ENCODE measurements at regions of chr22 and their contacts with region 1.

Region 1: GRCh38 chr22:46006379-46007002 is 29.5 kb upstream of the WNT7B start:
- DNase-seq: peak; percentile 91
- H3K4me3 Mint-ChIP-seq: peak overlapping the region; percentile 54
- H3K27ac Mint-ChIP-seq: peak overlapping the region; percentile 91
- H3K4me1 Mint-ChIP-seq: peaks cover 16% of the 10 kb centered on the region
- H3K27me3 Mint-ChIP-seq: no peaks in the 10 kb centered on the region
- CTCF ChIP-seq: peak; percentile 79

Region 2: GRCh38 chr22:45948081-45948648 is 58.3 kb before region 1 on chr22:
- CTCF ChIA-PET with region 1: no interaction called
- POLR2A ChIA-PET with region 1: no interaction called
- intact Hi-C with region 1: no loop called
- DNase-seq: no peak
- H3K4me3 Mint-ChIP-seq: no peak overlapping the region
- H3K27ac Mint-ChIP-seq: no peak overlapping the region
- H3K4me1 Mint-ChIP-seq: peaks cover 1% of the 10 kb centered on the region
- H3K27me3 Mint-ChIP-seq: no peaks in the 10 kb centered on the region
- CTCF ChIP-seq: no peak

Region 3: GRCh38 chr22:45994491-45995404 is 11.7 kb before region 1 on chr22:
- CTCF ChIA-PET with region 1: interaction called, 56 read pairs
- POLR2A ChIA-PET with region 1: no interaction called
- intact Hi-C with region 1: no loop called
- DNase-seq: peak; percentile 78
- H3K4me3 Mint-ChIP-seq: no peak overlapping the region
- H3K27ac Mint-ChIP-seq: no peak overlapping the region
- H3K4me1 Mint-ChIP-seq: no peaks in the 10 kb centered on the region
- H3K27me3 Mint-ChIP-seq: no peaks in the 10 kb centered on the region
- CTCF ChIP-seq: peak; percentile 96

Region 4: GRCh38 chr22:46044621-46045438 is 38.3 kb after region 1 on chr22:
- CTCF ChIA-PET with region 1: interaction called, 47 read pairs
- POLR2A ChIA-PET with region 1: interaction called, 23 read pairs
- intact Hi-C with region 1: no loop called
- DNase-seq: no peak
- H3K4me3 Mint-ChIP-seq: peak overlapping the region; percentile 79
- H3K27ac Mint-ChIP-seq: peak overlapping the region; percentile 97
- H3K4me1 Mint-ChIP-seq: peaks cover 14% of the 10 kb centered on the region
- H3K27me3 Mint-ChIP-seq: no peaks in the 10 kb centered on the region
- CTCF ChIP-seq: no peak

Region 5: DNA sequence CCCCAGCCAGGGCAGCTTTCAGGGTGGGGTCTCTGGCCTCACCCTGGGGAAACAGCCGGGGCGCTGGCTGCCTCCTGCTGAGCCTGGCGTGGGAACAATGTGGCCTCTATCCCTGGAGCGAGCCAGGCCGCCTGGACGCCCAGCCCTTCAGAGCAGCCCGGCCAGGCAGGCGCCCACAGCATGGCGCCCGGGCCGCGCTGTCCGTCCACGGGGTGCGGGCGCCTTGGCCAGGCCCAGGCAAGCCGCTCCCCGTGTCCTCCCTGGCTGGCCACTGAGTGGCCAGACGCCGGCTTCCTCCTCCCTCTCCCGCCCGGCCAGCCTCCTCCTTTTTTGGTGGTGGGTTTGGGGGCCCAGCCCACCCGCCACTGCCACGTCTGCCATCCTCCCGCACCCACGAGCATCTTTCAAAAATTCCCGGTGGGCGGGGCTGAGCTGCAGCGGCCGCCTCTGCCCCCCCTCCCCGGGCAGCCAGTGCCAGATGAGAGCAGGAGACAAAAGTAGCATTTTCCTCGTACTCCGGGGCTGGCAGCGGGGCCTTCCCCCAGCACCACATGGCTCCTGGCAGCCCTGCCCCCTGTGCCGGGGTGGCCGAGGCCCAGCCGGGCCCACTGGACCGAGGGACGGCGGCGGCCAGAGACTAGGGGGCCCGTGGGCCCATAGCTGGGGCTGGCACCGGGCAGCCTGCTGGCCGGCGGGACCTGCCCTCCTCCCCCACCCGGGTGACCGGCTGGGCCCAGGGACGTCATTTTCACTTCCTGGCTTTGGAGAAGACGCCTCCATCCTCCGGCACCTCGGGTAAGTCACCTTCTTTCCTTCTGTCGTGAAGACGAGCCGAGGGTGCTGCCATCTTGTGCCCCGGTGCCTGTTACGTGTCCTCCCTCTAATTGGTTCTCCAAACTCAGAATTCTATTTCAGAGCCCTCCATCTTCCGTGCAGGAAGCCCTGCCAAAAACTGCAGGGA is 73.7 kb after region 1 on chr22:
- CTCF ChIA-PET with region 1: interaction called, 13 read pairs
- POLR2A ChIA-PET with region 1: interaction called, 193 read pairs
- intact Hi-C with region 1: loop called (anchors 1 kb)
- DNase-seq: peak; percentile 90
- H3K4me3 Mint-ChIP-seq: peak overlapping the region; percentile 96
- H3K27ac Mint-ChIP-seq: peak overlapping the region; percentile 100
- H3K4me1 Mint-ChIP-seq: peaks cover 27% of the 10 kb centered on the region
- H3K27me3 Mint-ChIP-seq: no peaks in the 10 kb centered on the region
- CTCF ChIP-seq: no peak

Region 6: GRCh38 chr22:46116491-46116958 is 110.0 kb after region 1 on chr22:
- CTCF ChIA-PET with region 1: interaction called, 33 read pairs
- POLR2A ChIA-PET with region 1: interaction called, 30 read pairs
- intact Hi-C with region 1: loop called (anchors 1 kb)
- DNase-seq: peak; percentile 83
- H3K4me3 Mint-ChIP-seq: no peak overlapping the region
- H3K27ac Mint-ChIP-seq: peak overlapping the region; percentile 35
- H3K4me1 Mint-ChIP-seq: peaks cover 7% of the 10 kb centered on the region
- H3K27me3 Mint-ChIP-seq: no peaks in the 10 kb centered on the region
- CTCF ChIP-seq: peak; percentile 43

Region 7: GRCh38 chr22:46547883-46548244 is 541.4 kb after region 1 on chr22:
- CTCF ChIA-PET with region 1: no interaction called
- POLR2A ChIA-PET with region 1: no interaction called
- intact Hi-C with region 1: loop called (anchors 5 kb)
- DNase-seq: no peak
- H3K4me3 Mint-ChIP-seq: peak overlapping the region; percentile 33
- H3K27ac Mint-ChIP-seq: peak overlapping the region; percentile 85
- H3K4me1 Mint-ChIP-seq: peaks cover 21% of the 10 kb centered on the region
- H3K27me3 Mint-ChIP-seq: no peaks in the 10 kb centered on the region
- CTCF ChIP-seq: no peak

Measured in MCF 10A (cell line).